Endothelial cell of umbilical vein (primary cell): ENCODE measurements at regions of chr22 and their contacts with region 1.

Region 1: DNA sequence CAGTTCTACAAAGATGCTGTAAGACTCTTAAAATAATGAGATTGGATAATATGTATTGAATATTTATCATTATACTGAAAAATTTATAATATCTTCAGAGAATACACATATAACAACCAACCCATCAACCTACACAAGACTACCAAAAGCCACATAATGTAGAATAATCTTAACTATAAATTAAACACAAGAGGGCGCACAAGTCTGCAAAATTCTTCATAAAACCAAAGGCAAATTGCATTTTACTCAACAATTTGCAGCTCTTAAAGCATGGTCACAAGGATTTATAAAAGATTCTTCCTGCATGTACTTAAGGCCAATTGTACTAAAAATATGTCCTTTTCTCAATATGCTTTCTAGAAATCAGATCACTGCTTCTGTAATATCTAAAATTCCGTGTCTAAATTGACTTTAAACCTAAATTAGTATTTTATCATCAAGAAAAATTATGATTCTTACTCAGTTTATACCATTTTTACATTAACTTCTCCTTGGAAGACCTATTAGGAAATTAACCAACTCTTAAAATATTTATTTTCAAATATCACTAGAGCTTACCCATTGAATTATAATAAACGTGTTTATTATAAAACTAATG is 79.0 kb downstream of the TTC28 start:
- DNase-seq: peak; percentile 73
- H3K4me3 ChIP-seq: no peak overlapping the region
- H3K27ac ChIP-seq: no peak overlapping the region
- H3K4me1 ChIP-seq: peaks cover 8% of the 10 kb centered on the region
- H3K27me3 ChIP-seq: no peaks in the 10 kb centered on the region
- CTCF ChIP-seq: peak in 1 of 2 donors; percentile 10
- POLR2A ChIP-seq: no peak

Region 2: GRCh38 chr22:28019881-28020871 is 580.5 kb before region 1 on chr22:
- CTCF ChIA-PET with region 1: interaction called, 46 read pairs
- POLR2A ChIA-PET with region 1: no interaction called
- dilution Hi-C with region 1: no loop called
- intact Hi-C with region 1: no loop called
- DNase-seq: peak; percentile 52
- H3K4me3 ChIP-seq: no peak overlapping the region
- H3K27ac ChIP-seq: no peak overlapping the region
- H3K4me1 ChIP-seq: peaks cover 9% of the 10 kb centered on the region
- H3K27me3 ChIP-seq: no peaks in the 10 kb centered on the region
- CTCF ChIP-seq: peak; percentile 95 to 98
- POLR2A ChIP-seq: no peak

Region 3: GRCh38 chr22:28570691-28571373 is 29.8 kb before region 1 on chr22:
- CTCF ChIA-PET with region 1: no interaction called
- POLR2A ChIA-PET with region 1: no interaction called
- dilution Hi-C with region 1: no loop called
- intact Hi-C with region 1: no loop called
- DNase-seq: peak; percentile 39
- H3K4me3 ChIP-seq: no peak overlapping the region
- H3K27ac ChIP-seq: no peak overlapping the region
- H3K4me1 ChIP-seq: no peaks in the 10 kb centered on the region
- H3K27me3 ChIP-seq: no peaks in the 10 kb centered on the region
- CTCF ChIP-seq: no peak
- POLR2A ChIP-seq: no peak

Region 4: DNA sequence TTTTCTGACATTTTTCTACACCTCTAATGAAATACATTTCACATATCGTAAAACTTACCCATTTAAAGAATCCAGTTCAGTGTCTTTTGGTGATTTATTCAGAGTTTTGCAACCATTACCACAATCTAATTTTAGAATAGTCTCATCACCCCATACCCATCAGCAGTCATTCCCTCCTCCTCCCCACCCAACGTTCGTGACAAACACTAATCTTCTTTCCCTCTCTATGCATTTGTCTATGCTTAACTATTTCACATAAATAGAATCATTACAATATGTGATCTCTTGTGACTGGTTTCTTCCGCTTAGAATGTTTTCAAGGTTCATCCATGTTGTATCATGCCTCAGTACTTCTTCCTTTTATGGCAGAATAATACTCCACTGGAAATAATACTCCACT is 69.5 kb after region 1 on chr22:
- CTCF ChIA-PET with region 1: no interaction called
- POLR2A ChIA-PET with region 1: no interaction called
- dilution Hi-C with region 1: no loop called
- intact Hi-C with region 1: no loop called
- DNase-seq: no peak
- H3K4me3 ChIP-seq: no peak overlapping the region
- H3K27ac ChIP-seq: no peak overlapping the region
- H3K4me1 ChIP-seq: no peaks in the 10 kb centered on the region
- H3K27me3 ChIP-seq: no peaks in the 10 kb centered on the region
- CTCF ChIP-seq: no peak
- POLR2A ChIP-seq: no peak

Region 5: DNA sequence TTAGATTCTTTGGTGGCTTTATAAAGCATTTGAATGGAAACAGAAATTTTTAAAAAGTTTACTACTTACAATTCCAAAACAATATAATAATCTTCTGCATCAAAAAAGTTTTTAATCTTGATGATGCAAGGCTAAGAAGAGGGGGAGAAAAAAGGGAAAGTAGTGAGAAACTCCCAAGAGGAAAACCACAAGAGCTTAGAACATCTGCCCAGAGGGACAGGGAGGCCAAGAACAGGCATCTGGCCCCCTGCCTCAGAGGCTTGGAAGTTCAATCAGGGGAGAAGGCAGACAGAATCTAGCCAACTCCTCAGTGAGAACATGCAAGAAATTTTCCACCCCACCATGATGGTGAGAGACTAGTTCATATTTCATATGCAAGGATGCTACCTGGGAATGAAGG is 102.8 kb after region 1 on chr22:
- CTCF ChIA-PET with region 1: no interaction called
- POLR2A ChIA-PET with region 1: no interaction called
- dilution Hi-C with region 1: no loop called
- intact Hi-C with region 1: no loop called
- DNase-seq: no peak
- H3K4me3 ChIP-seq: no peak overlapping the region
- H3K27ac ChIP-seq: no peak overlapping the region
- H3K4me1 ChIP-seq: no peaks in the 10 kb centered on the region
- H3K27me3 ChIP-seq: no peaks in the 10 kb centered on the region
- CTCF ChIP-seq: no peak
- POLR2A ChIP-seq: no peak

Region 6: GRCh38 chr22:28750471-28750881 is 149.8 kb after region 1 on chr22:
- CTCF ChIA-PET with region 1: interaction called, 7 read pairs
- POLR2A ChIA-PET with region 1: no interaction called
- dilution Hi-C with region 1: no loop called
- intact Hi-C with region 1: loop called (anchors 2 kb)
- DNase-seq: peak; percentile 96
- H3K4me3 ChIP-seq: peak overlapping the region in 1 of 3 experiments; percentile 9
- H3K27ac ChIP-seq: peak overlapping the region; percentile 73
- H3K4me1 ChIP-seq: peaks cover 20% of the 10 kb centered on the region
- H3K27me3 ChIP-seq: no peaks in the 10 kb centered on the region
- CTCF ChIP-seq: no peak
- POLR2A ChIP-seq: no peak

Region 7: DNA sequence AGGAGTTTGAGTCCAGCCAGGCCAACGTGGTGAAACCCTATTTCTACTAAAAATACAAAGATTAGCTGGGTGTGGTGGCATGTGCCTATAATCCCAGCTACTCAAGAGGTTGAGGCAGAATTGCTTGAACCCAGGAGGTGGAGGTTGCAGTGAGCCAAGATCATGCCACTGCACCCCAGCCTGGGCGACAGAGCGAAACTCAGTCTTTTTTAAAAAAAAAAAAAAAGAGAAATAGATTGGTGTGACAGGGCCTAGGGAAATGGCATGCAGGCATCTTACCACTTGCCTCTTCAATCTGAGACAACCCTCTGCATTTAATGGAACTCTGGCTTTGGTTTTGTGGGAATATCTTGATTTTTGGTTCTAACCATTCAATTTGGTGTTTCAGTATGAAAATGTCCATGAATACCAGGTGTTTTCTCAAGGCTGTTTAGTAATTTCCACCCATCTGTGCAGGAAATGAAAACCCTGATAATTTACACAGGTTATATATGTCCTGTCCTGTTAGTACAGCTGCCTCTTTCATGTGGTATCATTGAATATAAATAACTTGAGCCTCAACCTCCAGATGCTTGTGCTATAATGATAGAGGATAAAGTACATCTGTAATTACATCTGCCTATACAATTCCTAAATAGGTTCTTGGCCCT is 191.3 kb after region 1 on chr22:
- CTCF ChIA-PET with region 1: interaction called, 25 read pairs
- POLR2A ChIA-PET with region 1: no interaction called
- dilution Hi-C with region 1: no loop called
- intact Hi-C with region 1: no loop called
- DNase-seq: peak; percentile 29
- H3K4me3 ChIP-seq: no peak overlapping the region
- H3K27ac ChIP-seq: no peak overlapping the region
- H3K4me1 ChIP-seq: no peaks in the 10 kb centered on the region
- H3K27me3 ChIP-seq: no peaks in the 10 kb centered on the region
- CTCF ChIP-seq: no peak
- POLR2A ChIP-seq: no peak

Region 8: GRCh38 chr22:28817919-28818909 is 217.6 kb after region 1 on chr22:
- CTCF ChIA-PET with region 1: interaction called, 15 read pairs
- POLR2A ChIA-PET with region 1: no interaction called
- dilution Hi-C with region 1: no loop called
- intact Hi-C with region 1: no loop called
- DNase-seq: no peak
- H3K4me3 ChIP-seq: no peak overlapping the region
- H3K27ac ChIP-seq: no peak overlapping the region
- H3K4me1 ChIP-seq: no peaks in the 10 kb centered on the region
- H3K27me3 ChIP-seq: no peaks in the 10 kb centered on the region
- CTCF ChIP-seq: no peak
- POLR2A ChIP-seq: no peak

Region 9: GRCh38 chr22:29040385-29041275 is 440.0 kb after region 1 on chr22:
- CTCF ChIA-PET with region 1: interaction called, 74 read pairs
- POLR2A ChIA-PET with region 1: no interaction called
- dilution Hi-C with region 1: no loop called
- intact Hi-C with region 1: loop called (anchors 1 kb)
- DNase-seq: peak; percentile 83
- H3K4me3 ChIP-seq: no peak overlapping the region
- H3K27ac ChIP-seq: no peak overlapping the region
- H3K4me1 ChIP-seq: peaks cover 28% of the 10 kb centered on the region
- H3K27me3 ChIP-seq: no peaks in the 10 kb centered on the region
- CTCF ChIP-seq: peak; percentile 89 to 96
- POLR2A ChIP-seq: no peak